Dendritic cell treated with granulocyte-macrophage colony-stimulating factor and Interleukin-4, amounts not matched to agents 40 ng/mL and 50 ng/mL, for 4 days (primary cell): ENCODE measurements at regions of chr20 and their contacts with region 1.

Region 1: GRCh38 chr20:52837378-52837777 is 134.8 kb upstream of the TSHZ2 start:
- H3K4me3 Mint-ChIP-seq: no peak overlapping the region
- H3K27ac Mint-ChIP-seq: no peak overlapping the region
- H3K4me1 Mint-ChIP-seq: no peaks in the 10 kb centered on the region
- H3K27me3 Mint-ChIP-seq: no peaks in the 10 kb centered on the region

Region 2: GRCh38 chr20:52777171-52777570 is 60.2 kb before region 1 on chr20:
- intact Hi-C with region 1: loop called (anchors 10 kb)
- H3K4me3 Mint-ChIP-seq: no peak overlapping the region
- H3K27ac Mint-ChIP-seq: no peak overlapping the region
- H3K4me1 Mint-ChIP-seq: no peaks in the 10 kb centered on the region
- H3K27me3 Mint-ChIP-seq: no peaks in the 10 kb centered on the region

Region 3: DNA sequence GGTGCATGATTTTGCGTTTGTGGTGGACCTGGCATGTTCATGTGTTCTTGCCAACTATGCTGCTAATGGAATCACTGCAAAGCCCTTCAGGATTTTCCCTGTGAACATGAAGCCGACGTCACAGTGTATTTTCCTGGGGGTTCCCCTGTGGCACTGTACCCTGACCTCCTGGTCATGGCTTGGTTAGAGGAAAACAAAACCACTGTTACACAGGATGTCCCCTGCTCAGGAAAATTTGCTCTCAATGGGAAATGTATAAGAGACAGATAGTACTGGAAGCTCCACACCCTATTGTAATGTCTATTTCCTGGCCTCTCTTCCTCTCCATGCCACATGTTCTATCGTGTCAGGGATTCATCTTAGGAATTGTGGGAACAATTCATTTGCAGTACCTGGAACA is 154.5 kb after region 1 on chr20:
- intact Hi-C with region 1: no loop called
- H3K4me3 Mint-ChIP-seq: no peak overlapping the region
- H3K27ac Mint-ChIP-seq: no peak overlapping the region
- H3K4me1 Mint-ChIP-seq: no peaks in the 10 kb centered on the region
- H3K27me3 Mint-ChIP-seq: no peaks in the 10 kb centered on the region

Region 4: DNA sequence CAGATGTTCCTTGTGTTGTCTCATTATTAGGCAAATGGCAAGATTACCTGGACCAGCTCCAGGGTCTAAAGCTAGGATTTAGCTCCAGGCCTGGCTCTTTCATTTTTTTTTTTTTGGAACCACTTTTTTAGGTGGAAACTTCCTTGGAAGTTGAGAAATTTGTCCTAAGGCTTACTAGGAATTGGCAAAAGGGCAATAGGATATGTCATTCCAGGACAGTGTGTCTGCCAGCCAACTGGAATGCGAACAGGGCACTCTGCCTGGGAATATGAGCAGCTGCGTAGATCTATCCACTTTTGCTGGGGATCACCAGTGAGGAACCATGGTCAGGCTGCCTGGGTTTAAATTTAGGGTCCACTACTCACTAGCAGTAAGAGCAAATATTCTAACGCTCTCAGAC is 438.8 kb after region 1 on chr20:
- intact Hi-C with region 1: no loop called
- H3K4me3 Mint-ChIP-seq: no peak overlapping the region
- H3K27ac Mint-ChIP-seq: no peak overlapping the region
- H3K4me1 Mint-ChIP-seq: no peaks in the 10 kb centered on the region
- H3K27me3 Mint-ChIP-seq: no peaks in the 10 kb centered on the region